Activated CD4-positive, alpha-beta T cell treated with anti-CD3 and anti-CD28 coated beads for 36 hours (primary cell): ENCODE measurements at regions of chr1 and their contacts with region 1.

Region 1: DNA sequence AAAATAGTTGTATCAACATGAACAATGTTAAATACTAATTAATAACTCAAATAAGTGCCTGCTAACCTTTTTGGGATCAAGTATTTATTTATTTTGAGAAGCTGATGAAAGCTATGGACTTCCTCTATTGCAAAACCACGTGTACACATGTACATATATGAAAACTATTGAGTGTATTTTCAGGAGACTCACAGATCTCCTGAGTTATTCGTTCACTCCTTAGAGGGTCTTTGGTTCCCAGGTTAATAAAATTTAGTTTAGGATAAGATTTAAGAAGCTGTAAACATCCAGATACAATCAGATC is 130.5 kb downstream of the DISC1 start:
- DNase-seq: no peak
- ATAC-seq: peak; percentile 42
- H3K4me3 Mint-ChIP-seq: no peak overlapping the region
- H3K27ac Mint-ChIP-seq: no peak overlapping the region
- H3K4me1 Mint-ChIP-seq: no peaks in the 10 kb centered on the region
- H3K27me3 Mint-ChIP-seq: no peaks in the 10 kb centered on the region

Region 2: GRCh38 chr1:230669543-230669942 is 1087.5 kb before region 1 on chr1:
- CTCF ChIA-PET with region 1: no interaction called
- POLR2A ChIA-PET with region 1: no interaction called
- intact Hi-C with region 1: no loop called
- DNase-seq: no peak
- ATAC-seq: no peak
- H3K4me3 Mint-ChIP-seq: no peak overlapping the region
- H3K27ac Mint-ChIP-seq: no peak overlapping the region
- H3K4me1 Mint-ChIP-seq: no peaks in the 10 kb centered on the region
- H3K27me3 Mint-ChIP-seq: no peaks in the 10 kb centered on the region

Region 3: DNA sequence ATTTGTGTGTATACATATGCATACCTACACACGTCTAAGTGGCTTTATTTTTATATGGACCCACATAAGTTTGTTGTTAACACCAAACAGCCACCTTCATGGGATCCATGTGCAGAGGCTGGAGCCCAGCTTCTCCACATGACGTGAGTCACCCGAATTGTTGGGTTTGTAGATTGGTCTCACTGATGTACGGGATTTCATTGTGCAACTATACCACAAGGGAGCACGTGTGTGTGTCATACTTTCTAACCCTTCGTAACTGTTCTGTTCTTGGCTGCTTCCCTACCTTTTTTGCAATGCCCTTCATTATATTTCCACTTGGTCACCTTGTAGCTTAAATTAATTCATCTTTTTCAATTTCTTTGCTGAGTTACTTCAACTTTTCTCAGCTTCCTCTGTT is 397.9 kb before region 1 on chr1:
- CTCF ChIA-PET with region 1: no interaction called
- POLR2A ChIA-PET with region 1: no interaction called
- intact Hi-C with region 1: no loop called
- DNase-seq: peak; percentile 19
- ATAC-seq: no peak
- H3K4me3 Mint-ChIP-seq: no peak overlapping the region
- H3K27ac Mint-ChIP-seq: no peak overlapping the region
- H3K4me1 Mint-ChIP-seq: peaks cover 6% of the 10 kb centered on the region
- H3K27me3 Mint-ChIP-seq: no peaks in the 10 kb centered on the region

Region 4: GRCh38 chr1:231768416-231768815 is 11.4 kb after region 1 on chr1:
- CTCF ChIA-PET with region 1: interaction called, 30 read pairs
- POLR2A ChIA-PET with region 1: no interaction called
- intact Hi-C with region 1: no loop called
- DNase-seq: no peak
- ATAC-seq: no peak
- H3K4me3 Mint-ChIP-seq: no peak overlapping the region
- H3K27ac Mint-ChIP-seq: no peak overlapping the region
- H3K4me1 Mint-ChIP-seq: no peaks in the 10 kb centered on the region
- H3K27me3 Mint-ChIP-seq: no peaks in the 10 kb centered on the region

Region 5: GRCh38 chr1:231774719-231775335 is 17.8 kb after region 1 on chr1:
- CTCF ChIA-PET with region 1: interaction called, 28 read pairs
- POLR2A ChIA-PET with region 1: no interaction called
- intact Hi-C with region 1: no loop called
- DNase-seq: no peak
- ATAC-seq: no peak
- H3K4me3 Mint-ChIP-seq: no peak overlapping the region
- H3K27ac Mint-ChIP-seq: no peak overlapping the region
- H3K4me1 Mint-ChIP-seq: no peaks in the 10 kb centered on the region
- H3K27me3 Mint-ChIP-seq: no peaks in the 10 kb centered on the region

Region 6: GRCh38 chr1:231806623-231807495 is 49.8 kb after region 1 on chr1:
- CTCF ChIA-PET with region 1: interaction called, 14 read pairs
- POLR2A ChIA-PET with region 1: no interaction called
- intact Hi-C with region 1: loop called (anchors 1 to 2 kb)
- DNase-seq: peak; percentile 68
- ATAC-seq: peak; percentile 90
- H3K4me3 Mint-ChIP-seq: no peak overlapping the region
- H3K27ac Mint-ChIP-seq: no peak overlapping the region
- H3K4me1 Mint-ChIP-seq: no peaks in the 10 kb centered on the region
- H3K27me3 Mint-ChIP-seq: no peaks in the 10 kb centered on the region

Region 7: GRCh38 chr1:231853588-231854207 is 96.6 kb after region 1 on chr1:
- CTCF ChIA-PET with region 1: no interaction called
- POLR2A ChIA-PET with region 1: no interaction called
- intact Hi-C with region 1: no loop called
- DNase-seq: no peak
- ATAC-seq: no peak
- H3K4me3 Mint-ChIP-seq: no peak overlapping the region
- H3K27ac Mint-ChIP-seq: no peak overlapping the region
- H3K4me1 Mint-ChIP-seq: no peaks in the 10 kb centered on the region
- H3K27me3 Mint-ChIP-seq: no peaks in the 10 kb centered on the region

Region 8: GRCh38 chr1:231931846-231932454 is 174.9 kb after region 1 on chr1:
- CTCF ChIA-PET with region 1: interaction called, 3 read pairs
- POLR2A ChIA-PET with region 1: no interaction called
- intact Hi-C with region 1: loop called in 1 of 2 experiments (anchors 5 kb)
- DNase-seq: peak; percentile 71
- ATAC-seq: peak; percentile 39
- H3K4me3 Mint-ChIP-seq: no peak overlapping the region
- H3K27ac Mint-ChIP-seq: no peak overlapping the region
- H3K4me1 Mint-ChIP-seq: peaks cover 20% of the 10 kb centered on the region
- H3K27me3 Mint-ChIP-seq: no peaks in the 10 kb centered on the region